Ascending aorta (tissue), 2 donors: ENCODE measurements at regions of chr1 and their contacts with region 1.

Region 1: GRCh38 chr1:34852677-34853217 is 6.8 kb downstream of the SMIM12 start:
- DNase-seq: peak; percentile 87 to 97
- H3K4me3 ChIP-seq: no peak overlapping the region
- H3K27ac ChIP-seq: peak overlapping the region; percentile 83 to 91
- H3K4me1 ChIP-seq: peaks cover 8 to 24% of the 10 kb centered on the region in 2 donors
- H3K27me3 ChIP-seq: no peaks in the 10 kb centered on the region
- CTCF ChIP-seq: peak; percentile 97 to 100 (median 99)

Region 2: DNA sequence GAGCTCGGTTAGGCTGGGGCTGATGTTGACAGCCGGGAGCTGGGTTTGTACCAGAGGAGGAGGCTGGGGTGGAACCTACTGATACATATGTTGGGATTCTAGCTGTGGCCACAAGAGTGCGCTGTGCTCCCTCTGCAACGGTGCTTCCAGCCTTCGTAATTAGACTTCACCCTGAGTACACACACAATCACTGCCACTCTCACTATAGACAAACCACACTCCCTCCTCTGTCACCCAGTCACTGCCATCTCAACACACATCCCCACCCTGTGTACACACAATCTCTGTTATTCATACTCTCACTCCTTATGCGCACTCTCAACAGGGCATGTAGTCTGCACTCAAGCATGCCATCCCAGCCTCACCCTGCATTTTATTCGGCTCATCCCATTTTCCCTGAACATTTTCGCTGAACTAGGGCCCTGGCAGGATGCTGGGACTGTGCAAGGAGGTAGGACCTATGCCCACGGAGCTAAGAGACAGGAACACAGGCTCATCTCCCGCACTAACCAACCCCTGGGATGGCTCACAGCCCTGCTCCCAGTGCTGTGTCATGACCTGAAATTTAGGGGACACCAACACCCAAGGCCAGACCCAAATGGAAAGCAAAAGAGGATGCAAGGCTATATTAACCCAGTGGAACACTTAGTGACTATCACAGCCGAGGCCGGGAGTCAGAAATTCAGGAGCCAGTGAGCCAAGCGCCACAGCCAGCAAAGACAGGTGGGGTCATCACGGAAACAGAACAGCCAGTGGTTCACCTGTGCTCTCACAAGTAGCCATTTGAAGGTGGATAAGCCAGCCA is 66.0 kb before region 1 on chr1:
- intact Hi-C with region 1: loop called (anchors 1 kb)
- DNase-seq: peak in 1 of 2 donors; percentile 81
- H3K4me3 ChIP-seq: no peak overlapping the region
- H3K27ac ChIP-seq: peak overlapping the region; percentile 48 to 50
- H3K4me1 ChIP-seq: peaks cover 3 to 13% of the 10 kb centered on the region in 2 donors
- H3K27me3 ChIP-seq: peaks cover under 1% of the 10 kb centered on the region
- CTCF ChIP-seq: peak; percentile 85 to 86 (median 85)

Region 3: DNA sequence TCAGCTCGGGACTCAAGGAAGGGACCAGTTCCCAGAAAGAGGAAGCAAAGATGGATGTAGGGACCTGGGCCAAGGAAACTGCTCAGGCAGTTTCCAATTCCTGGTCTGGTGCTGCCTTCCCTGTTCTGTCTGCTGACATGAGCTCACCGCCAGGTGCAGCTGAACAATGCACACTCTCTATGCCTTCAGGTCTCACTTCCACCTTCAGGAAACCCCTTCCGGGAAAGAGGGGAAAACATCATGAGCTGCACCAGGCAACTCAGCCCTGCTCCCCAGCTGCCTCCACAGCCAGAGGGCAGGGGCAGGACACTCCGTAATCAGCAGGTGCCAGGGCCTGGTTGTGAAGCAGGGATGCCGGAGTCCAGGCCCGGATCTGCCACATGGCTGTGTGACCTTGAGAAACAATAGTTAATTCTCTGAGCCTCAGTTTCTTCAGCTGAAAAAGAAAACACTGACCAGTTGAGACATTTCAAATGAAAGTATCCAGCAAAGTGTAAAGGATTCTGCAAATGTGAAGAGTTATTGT is 21.0 kb before region 1 on chr1:
- intact Hi-C with region 1: loop called (anchors 2 kb)
- DNase-seq: peak in 1 of 2 donors; percentile 22
- H3K4me3 ChIP-seq: no peak overlapping the region
- H3K27ac ChIP-seq: no peak overlapping the region
- H3K4me1 ChIP-seq: peaks cover 13 to 27% of the 10 kb centered on the region in 2 donors
- H3K27me3 ChIP-seq: no peaks in the 10 kb centered on the region
- CTCF ChIP-seq: no peak

Region 4: DNA sequence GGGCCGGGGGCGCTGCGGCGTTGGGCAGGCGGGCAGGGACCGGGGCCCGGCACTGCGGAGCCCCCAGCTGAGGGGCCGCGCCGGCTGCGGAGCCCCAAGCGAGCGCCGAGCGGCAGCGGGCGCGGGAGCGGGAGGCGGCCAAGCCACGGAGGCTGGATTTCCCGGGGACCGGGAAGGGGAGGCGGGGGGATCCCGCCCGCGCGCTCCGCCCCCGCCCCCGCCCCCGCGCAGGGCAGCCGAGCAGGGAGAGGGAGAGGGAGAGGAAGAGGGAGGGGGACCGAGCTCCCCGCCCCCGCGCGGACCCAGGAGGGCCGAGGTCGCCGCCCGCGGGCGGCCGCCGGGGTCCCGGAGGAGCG is 76.7 kb after region 1 on chr1 and contains the start of gene DLGAP3:
- intact Hi-C with region 1: no loop called
- DNase-seq: no peak
- H3K4me3 ChIP-seq: peak within 1 kb of the TSS; percentile 55 to 60
- H3K27ac ChIP-seq: no peak within 1 kb of the TSS
- H3K4me1 ChIP-seq: peaks cover 4 to 11% of the 10 kb centered on the region in 2 donors
- H3K27me3 ChIP-seq: peaks cover 26% of the 10 kb centered on the region
- CTCF ChIP-seq: no peak
- total RNA-seq, gene DLGAP3: not detected

Region 5: DNA sequence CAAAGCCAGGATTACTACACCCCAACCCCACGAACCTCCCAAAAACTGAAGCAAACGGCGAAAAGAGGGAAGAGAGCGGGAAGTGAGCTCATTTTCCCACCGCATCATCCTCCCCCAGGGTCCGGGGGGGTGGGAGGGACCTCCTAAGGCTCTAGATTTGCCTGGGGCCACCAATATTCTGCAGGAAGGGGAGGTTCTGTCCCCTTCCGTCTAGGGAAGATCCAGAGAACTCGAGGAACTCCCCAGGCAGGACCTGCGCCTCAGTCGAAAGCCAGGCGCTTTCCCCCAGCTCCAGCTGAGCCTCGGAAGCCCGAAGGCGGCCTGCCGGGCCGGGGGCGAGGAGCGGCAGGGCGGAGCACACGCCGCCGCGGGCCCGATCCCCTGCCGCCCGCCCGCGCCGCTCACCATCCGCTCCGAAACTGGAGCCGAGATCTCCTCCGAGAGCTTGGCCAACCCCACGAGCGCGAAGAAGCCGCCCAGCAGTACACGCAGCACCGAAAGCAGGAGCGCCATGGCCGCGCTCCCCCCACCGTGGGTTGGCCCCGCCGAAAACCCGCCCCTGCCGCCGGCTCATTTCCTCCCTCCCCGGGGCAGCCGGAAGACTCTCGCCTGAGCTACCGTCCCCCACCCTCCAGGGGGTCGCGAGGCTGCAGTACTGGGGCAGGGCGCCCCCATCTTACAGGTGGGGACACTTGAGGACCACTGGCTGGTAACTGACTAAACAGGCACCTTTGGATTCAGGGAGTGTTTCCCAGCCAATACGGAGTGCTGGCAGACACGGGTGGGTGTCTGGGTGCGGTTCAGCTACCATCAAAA is 132.3 kb after region 1 on chr1 and contains the start of gene TMEM35B:
- intact Hi-C with region 1: loop called (anchors 5 kb)
- DNase-seq: peak in 1 of 2 donors; percentile 81
- H3K4me3 ChIP-seq: peak within 1 kb of the TSS; percentile 70 to 92
- H3K27ac ChIP-seq: peak within 1 kb of the TSS; percentile 95 to 96
- H3K4me1 ChIP-seq: peaks cover 8 to 15% of the 10 kb centered on the region in 2 donors
- H3K27me3 ChIP-seq: no peaks in the 10 kb centered on the region
- CTCF ChIP-seq: peak in 1 of 3 experiments; percentile 5
- total RNA-seq, gene TMEM35B: 16.1 TPM